IMR-90 (cell line): ENCODE measurements at regions of chr17 and their contacts with region 1.

Region 1: GRCh38 chr17:39001703-39002637 is 34.8 kb upstream of the FBXO47 start:
- DNase-seq: peak; percentile 13
- ATAC-seq: peak; percentile 59; the same call in 1 of the 2 replicates
- H3K4me3 ChIP-seq: no peak overlapping the region
- H3K27ac ChIP-seq: no peak overlapping the region
- H3K4me1 ChIP-seq: peaks cover 6% of the 10 kb centered on the region
- H3K27me3 ChIP-seq: peaks cover 12% of the 10 kb centered on the region
- CTCF ChIP-seq: no peak
- POLR2A ChIP-seq: no peak
- RAD21 ChIP-seq: no peak

Region 2: DNA sequence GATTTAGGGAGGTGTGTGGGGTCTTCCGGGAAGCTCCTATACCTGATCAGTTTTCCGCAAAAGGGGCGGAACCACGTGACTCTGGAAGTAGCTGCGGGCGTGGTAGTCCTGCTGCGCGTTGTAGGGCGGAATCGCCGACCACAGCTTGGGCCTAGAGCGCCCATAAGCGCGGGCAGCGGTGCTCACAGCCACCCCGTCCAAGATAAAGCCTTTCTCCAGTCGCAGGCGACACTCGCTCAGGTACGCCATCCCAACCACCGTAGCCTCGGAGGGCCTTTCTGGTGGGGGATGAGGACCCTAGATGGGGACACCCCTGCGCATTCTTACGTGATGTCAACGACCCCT is 160.9 kb before region 1 on chr17:
- CTCF ChIA-PET with region 1: no interaction called
- POLR2A ChIA-PET with region 1: interaction called, 12 read pairs
- dilution Hi-C with region 1: no loop called
- in situ Hi-C with region 1: no loop called
- intact Hi-C with region 1: no loop called
- DNase-seq: no peak
- ATAC-seq: no peak
- H3K4me3 ChIP-seq: no peak overlapping the region
- H3K27ac ChIP-seq: no peak overlapping the region
- H3K4me1 ChIP-seq: no peaks in the 10 kb centered on the region
- H3K27me3 ChIP-seq: no peaks in the 10 kb centered on the region
- CTCF ChIP-seq: no peak
- POLR2A ChIP-seq: no peak
- RAD21 ChIP-seq: no peak

Region 3: DNA sequence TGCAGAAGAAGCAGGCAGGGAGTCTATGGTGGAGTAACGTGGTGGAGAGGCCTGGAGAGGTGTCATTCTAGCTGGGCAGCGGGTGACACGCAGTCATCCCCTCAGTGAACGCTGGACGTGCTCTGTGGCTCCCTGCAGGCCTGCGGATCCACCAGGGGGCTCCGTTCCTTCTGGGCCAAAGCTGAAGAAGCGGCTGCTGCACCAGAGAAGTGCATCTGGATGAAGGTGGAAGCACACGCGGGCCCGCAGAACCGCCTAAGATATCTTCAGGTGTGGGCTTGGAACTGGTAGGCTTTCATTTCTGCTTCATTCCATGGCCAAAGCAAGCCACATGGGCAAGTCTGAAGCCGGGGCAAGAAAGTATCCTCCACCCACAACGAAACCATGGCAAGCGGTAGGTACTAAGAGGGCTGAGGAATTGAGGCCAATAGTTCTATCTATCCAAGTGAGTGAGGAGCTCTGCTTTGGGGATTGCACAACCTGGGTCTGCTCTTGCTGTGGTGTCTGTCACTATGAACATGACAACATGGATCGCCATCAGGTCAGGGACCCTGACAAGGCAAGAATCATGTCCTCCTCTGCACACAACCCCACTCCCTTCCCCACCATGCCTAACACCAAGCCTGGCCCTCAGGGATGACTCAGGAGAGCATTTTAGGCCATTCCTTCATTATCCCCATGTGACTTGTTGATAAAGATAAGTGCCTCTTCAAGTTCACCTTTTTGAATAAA is 44.1 kb after region 1 on chr17:
- CTCF ChIA-PET with region 1: no interaction called
- POLR2A ChIA-PET with region 1: no interaction called
- dilution Hi-C with region 1: no loop called
- in situ Hi-C with region 1: no loop called
- intact Hi-C with region 1: loop called (anchors 5 kb)
- DNase-seq: no peak
- ATAC-seq: no peak
- H3K4me3 ChIP-seq: no peak overlapping the region
- H3K27ac ChIP-seq: peak overlapping the region; percentile 50
- H3K4me1 ChIP-seq: no peaks in the 10 kb centered on the region
- H3K27me3 ChIP-seq: peaks cover 9% of the 10 kb centered on the region
- CTCF ChIP-seq: no peak
- POLR2A ChIP-seq: no peak
- RAD21 ChIP-seq: no peak